Panc1 (cell line): ENCODE measurements at regions of chr15 and their contacts with region 1.

Region 1: GRCh38 chr15:79543097-79543496 is 111.0 kb downstream of the MINAR1 start:
- DNase-seq: no peak
- ATAC-seq: no peak
- H3K4me3 ChIP-seq: no peak overlapping the region
- H3K27ac ChIP-seq: no peak overlapping the region
- H3K4me1 ChIP-seq: no peaks in the 10 kb centered on the region
- H3K27me3 ChIP-seq: 0 out of 2 replicates have a peak, but pooled peaks cover 3% of the 10 kb centered on the region
- CTCF ChIP-seq: no peak

Region 2: GRCh38 chr15:79523266-79523665 is 19.8 kb before region 1 on chr15:
- CTCF ChIA-PET with region 1: no interaction called
- POLR2A ChIA-PET with region 1: no interaction called
- in situ Hi-C with region 1: no loop called
- intact Hi-C with region 1: no loop called
- DNase-seq: no peak
- ATAC-seq: no peak
- H3K4me3 ChIP-seq: no peak overlapping the region
- H3K27ac ChIP-seq: no peak overlapping the region
- H3K4me1 ChIP-seq: no peaks in the 10 kb centered on the region
- H3K27me3 ChIP-seq: peaks cover 10% of the 10 kb centered on the region
- CTCF ChIP-seq: no peak

Region 3: GRCh38 chr15:80323285-80323684 is 780.2 kb after region 1 on chr15:
- CTCF ChIA-PET with region 1: no interaction called
- POLR2A ChIA-PET with region 1: interaction called, 13 read pairs
- in situ Hi-C with region 1: no loop called
- intact Hi-C with region 1: no loop called
- DNase-seq: no peak
- ATAC-seq: no peak
- H3K4me3 ChIP-seq: no peak overlapping the region
- H3K27ac ChIP-seq: no peak overlapping the region
- H3K4me1 ChIP-seq: no peaks in the 10 kb centered on the region
- H3K27me3 ChIP-seq: no peaks in the 10 kb centered on the region
- CTCF ChIP-seq: peak; percentile 33; the same call in 1 of the 2 replicates